WTC11 (cell line): ENCODE measurements at regions of chr15 and their contacts with region 1.

Region 1: GRCh38 chr15:84716036-84716799 is at the start of gene SEC11A:
- DNase-seq: peak; percentile 94
- ATAC-seq: peak; percentile 96
- H3K4me3 Mint-ChIP-seq: peak within 1 kb of the TSS; percentile 91
- H3K27ac Mint-ChIP-seq: peak within 1 kb of the TSS; percentile 97
- H3K4me1 Mint-ChIP-seq: peaks cover 28% of the 10 kb centered on the region
- H3K27me3 Mint-ChIP-seq: no peaks in the 10 kb centered on the region
- CTCF ChIP-seq: no peak
- total RNA-seq, gene SEC11A: 214 to 228 TPM (median 217 TPM) in 3 replicates

Region 2: DNA sequence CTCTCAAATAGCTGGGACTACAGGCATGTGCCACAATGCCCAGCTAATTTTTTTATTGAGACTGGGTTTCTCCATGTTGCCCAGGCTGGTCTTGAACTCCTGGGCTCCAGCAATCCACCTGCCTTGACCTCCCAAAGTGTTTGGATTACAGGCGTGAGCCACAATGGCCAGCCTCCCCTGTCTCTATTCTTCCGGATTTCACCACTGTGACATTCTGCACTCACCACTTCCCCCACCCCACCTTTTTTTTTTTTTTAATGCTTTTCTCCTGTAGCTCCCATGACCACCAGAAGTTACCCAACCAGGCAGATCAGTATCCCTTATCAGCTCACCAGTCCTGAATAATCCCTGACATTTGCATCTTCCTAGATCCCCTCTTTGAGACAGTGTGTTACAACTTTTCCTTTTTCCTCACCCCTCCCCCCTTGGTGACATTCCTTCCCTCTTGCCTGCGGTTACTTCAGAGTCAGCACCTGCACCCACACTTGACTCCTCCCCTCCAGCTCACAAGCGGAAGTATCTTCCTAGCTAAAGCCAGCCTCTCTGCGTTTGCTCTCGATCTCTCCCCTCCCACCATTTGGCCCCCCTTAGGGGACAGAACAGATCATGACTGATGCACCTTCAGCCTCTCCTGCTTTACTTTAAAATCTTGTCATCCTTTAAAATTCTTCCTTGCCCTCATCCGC is 18.7 kb after region 1 on chr15:
- CTCF ChIA-PET with region 1: interaction called, 16 read pairs
- POLR2A ChIA-PET with region 1: interaction called, 31 read pairs
- DNase-seq: peak; percentile 78
- ATAC-seq: peak; percentile 98
- H3K4me3 Mint-ChIP-seq: peak overlapping the region; percentile 57
- H3K27ac Mint-ChIP-seq: peak overlapping the region; percentile 94
- H3K4me1 Mint-ChIP-seq: peaks cover 27% of the 10 kb centered on the region
- H3K27me3 Mint-ChIP-seq: no peaks in the 10 kb centered on the region
- CTCF ChIP-seq: no peak

Region 3: GRCh38 chr15:84748274-84749110 is 32.3 kb after region 1 on chr15 and contains the start of gene ZNF592:
- CTCF ChIA-PET with region 1: interaction called, 9 read pairs
- POLR2A ChIA-PET with region 1: interaction called, 18 read pairs
- DNase-seq: peak; percentile 65
- ATAC-seq: peak; percentile 64
- H3K4me3 Mint-ChIP-seq: peak within 1 kb of the TSS; percentile 92
- H3K27ac Mint-ChIP-seq: peak within 1 kb of the TSS; percentile 99
- H3K4me1 Mint-ChIP-seq: peaks cover 39% of the 10 kb centered on the region
- H3K27me3 Mint-ChIP-seq: no peaks in the 10 kb centered on the region
- CTCF ChIP-seq: no peak
- total RNA-seq, gene ZNF592: 26.7 to 28.0 TPM (median 27.6 TPM) in 3 replicates

Region 4: DNA sequence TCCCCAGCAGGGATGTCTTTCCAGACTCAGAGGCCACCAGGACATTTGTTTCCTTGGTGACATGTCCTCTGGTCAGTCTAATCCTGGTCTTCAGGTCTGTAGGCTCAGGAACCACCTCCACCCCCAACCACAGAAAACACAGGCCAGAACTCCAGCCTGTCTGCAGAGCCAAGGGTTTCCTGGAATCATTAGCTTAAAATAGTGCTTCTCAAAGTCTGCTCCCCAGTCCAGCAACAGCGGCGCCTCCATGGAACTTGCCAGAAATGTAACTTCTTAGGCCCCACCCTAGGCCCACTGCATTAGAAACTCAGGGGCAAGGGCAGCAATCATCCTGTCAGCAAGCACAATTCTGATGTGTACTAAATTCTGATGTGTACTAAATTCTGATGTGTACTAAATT is 188.2 kb after region 1 on chr15:
- CTCF ChIA-PET with region 1: no interaction called
- POLR2A ChIA-PET with region 1: no interaction called
- DNase-seq: no peak
- ATAC-seq: no peak
- H3K4me3 Mint-ChIP-seq: no peak overlapping the region
- H3K27ac Mint-ChIP-seq: no peak overlapping the region
- H3K4me1 Mint-ChIP-seq: peaks cover 8% of the 10 kb centered on the region
- H3K27me3 Mint-ChIP-seq: no peaks in the 10 kb centered on the region
- CTCF ChIP-seq: no peak